HEK293 (cell line): ENCODE measurements at regions of chr17 and their contacts with region 1.

Region 1: DNA sequence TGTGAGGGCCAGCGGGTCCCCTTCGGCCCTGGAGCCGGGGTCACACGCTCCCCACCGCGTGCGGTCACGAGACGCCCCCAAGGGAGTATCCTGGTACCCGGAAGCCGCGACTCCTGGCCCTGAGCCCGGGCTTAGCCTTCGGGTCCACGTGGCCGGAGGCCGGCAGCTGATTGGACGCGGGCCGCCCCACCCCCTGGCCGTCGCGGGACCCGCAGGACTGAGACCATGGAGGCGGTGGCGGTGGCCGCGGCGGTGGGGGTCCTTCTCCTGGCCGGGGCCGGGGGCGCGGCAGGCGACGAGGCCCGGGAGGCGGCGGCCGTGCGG is at the start of gene NAGLU:
- H3K4me3 ChIP-seq: peak within 1 kb of the TSS; percentile 44
- H3K27ac ChIP-seq: peak within 1 kb of the TSS; percentile 98
- H3K4me1 ChIP-seq: peaks cover 13% of the 10 kb centered on the region
- CTCF ChIP-seq: no peak

Region 2: DNA sequence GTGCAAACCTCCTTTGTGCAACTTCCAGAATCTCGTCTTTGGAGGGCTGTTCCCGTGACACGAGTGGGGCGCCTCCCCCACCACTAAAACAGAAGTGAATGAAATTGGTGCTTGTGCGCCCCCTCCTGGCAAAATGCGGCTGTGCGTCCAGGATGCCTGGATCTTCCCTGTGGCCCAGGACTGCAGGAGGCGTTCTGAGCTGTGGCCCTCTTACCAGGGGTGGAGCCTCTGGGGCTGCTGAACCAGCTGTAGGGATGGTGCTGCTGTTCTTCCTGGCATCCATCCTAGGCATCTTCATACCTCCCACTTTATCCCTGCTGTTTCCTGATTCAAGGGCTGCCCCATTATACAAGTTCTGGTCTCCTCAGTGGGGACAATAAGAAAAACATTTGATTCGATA is 18.5 kb before region 1 on chr17:
- CTCF ChIA-PET with region 1: interaction called, 22 read pairs
- POLR2A ChIA-PET with region 1: interaction called, 23 read pairs
- H3K4me3 ChIP-seq: no peak overlapping the region
- H3K27ac ChIP-seq: no peak overlapping the region
- H3K4me1 ChIP-seq: peaks cover 25% of the 10 kb centered on the region
- CTCF ChIP-seq: peak; percentile 94

Region 3: DNA sequence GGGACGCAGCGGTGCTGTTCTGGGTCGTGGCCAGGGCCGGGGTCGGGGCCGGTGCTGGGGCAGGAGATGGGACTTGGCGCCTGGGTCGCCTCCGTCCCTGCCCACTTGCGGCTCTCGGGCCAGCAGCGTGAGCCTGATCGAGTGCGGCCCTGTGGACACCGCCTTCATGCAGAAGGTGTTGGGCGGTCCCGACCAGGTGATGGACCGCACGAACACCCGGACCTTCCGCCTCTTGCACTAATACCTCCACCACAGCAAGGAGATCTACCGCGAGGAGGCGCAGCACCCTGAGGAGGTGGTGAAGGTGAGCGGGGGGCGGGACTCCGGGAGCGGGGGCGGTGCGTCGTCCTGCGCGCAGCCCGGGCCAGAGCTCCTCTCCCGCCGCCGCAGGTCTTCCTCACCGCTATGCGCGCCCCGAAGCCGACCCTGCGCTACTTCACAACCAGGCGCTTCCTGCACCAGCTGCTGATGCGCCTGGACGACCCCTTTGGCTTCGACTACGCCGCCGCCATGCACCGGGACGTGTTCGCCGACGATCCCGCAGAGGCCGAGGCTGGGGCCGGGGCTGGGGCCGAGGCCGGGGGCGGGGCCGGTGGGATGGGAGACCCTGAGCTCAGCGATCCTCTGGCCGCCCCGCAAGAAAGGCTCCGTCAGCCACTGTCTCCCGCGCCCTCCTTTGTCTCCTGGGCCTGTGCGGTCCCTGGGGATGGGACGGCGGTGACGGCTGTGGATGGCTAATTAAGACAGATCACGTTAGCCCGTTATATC is 12.2 kb after region 1 on chr17:
- CTCF ChIA-PET with region 1: interaction called, 19 read pairs
- POLR2A ChIA-PET with region 1: interaction called, 20 read pairs
- H3K4me3 ChIP-seq: peak overlapping the region; percentile 38
- H3K27ac ChIP-seq: peak overlapping the region; percentile 37; the same call in 1 of the 2 replicates
- H3K4me1 ChIP-seq: peaks cover 4% of the 10 kb centered on the region; the same call in 1 of the 2 replicates
- CTCF ChIP-seq: no peak

Region 4: DNA sequence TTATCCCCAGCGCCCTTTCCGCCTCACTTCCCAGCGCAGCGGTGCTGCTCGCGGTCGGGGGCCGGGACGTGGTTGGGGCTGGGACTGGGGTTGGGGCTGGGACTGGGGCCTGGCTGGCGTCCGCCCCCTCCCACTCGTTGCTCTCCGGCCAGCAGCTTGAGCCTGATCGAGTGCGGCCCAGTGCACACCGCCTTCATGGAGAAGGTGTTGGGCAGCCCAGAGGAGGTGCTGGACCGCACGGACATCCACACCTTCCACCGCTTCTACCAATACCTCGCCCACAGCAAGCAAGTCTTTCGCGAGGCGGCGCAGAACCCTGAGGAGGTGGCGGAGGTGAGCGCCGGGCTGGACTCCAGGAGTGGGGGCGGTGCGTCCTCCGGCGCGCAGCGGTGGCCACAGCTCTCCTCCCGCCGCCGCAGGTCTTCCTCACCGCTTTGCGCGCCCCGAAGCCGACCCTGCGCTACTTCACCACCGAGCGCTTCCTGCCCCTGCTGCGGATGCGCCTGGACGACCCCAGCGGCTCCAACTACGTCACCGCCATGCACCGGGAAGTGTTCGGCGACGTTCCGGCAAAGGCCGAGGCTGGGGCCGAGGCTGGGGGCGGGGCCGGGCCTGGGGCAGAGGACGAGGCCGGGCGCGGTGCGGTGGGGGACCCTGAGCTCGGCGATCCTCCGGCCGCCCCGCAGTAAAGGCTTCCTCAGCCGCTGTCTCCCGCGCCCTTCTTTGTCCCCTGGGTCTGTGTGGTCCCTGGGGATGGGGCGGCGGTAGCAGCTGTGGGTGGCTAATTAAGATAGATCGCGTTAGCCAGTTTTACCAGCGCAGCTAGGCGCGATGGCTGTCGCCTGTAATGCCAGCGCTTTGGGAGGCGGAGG is 18.5 kb after region 1 on chr17:
- CTCF ChIA-PET with region 1: interaction called, 3 read pairs
- POLR2A ChIA-PET with region 1: interaction called, 12 read pairs
- H3K4me3 ChIP-seq: peak overlapping the region; percentile 68
- H3K27ac ChIP-seq: peak overlapping the region; percentile 95
- H3K4me1 ChIP-seq: peaks cover 5% of the 10 kb centered on the region; the same call in 1 of the 2 replicates
- CTCF ChIP-seq: peak; percentile 73